K562 (cell line): ENCODE measurements at regions of chr17 and their contacts with region 1.

Region 1: DNA sequence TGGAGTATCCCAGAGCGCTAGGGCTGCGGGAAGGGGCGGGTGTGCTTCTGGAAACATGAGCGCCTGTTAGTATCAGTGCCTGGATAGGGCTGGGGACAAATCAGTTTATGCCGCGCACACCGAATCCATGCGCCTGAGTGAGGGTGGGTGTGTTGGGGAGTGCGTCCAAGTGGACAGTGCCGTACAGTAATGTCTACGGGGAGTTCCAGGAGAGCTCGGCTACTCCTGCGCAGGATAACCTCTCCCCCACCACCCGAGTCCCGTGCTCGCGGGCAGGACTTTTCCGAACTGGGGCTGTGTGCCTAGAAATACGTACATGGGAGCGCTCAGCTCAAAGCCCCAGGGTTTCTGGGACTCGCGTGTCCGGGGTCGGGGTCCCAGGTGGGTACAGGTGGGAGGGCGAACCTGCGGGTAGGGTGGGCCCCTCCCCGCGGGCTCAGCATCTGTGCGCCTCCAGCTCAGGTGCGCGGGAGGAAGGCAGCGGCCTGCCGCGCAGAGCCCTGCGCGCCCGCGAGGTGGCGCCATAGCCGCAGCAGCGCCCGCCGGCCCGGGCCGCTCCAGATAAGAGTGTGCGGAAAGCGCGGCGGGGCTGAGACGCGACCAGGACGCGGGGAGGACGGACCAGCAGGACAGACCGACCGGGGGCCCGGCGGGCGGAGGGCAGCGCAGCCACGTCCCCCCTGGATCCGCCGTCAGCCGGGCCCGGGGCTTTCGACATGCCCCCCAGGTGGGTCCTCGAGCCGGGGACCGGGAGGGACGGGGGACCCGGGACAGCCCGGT is at the start of gene HIC1:
- DNase-seq: peak; percentile 51 to 67 (median 52)
- ATAC-seq: peak; percentile 78
- H3K4me3 ChIP-seq: peak within 1 kb of the TSS; percentile 37
- H3K27ac ChIP-seq: no peak within 1 kb of the TSS
- H3K4me1 ChIP-seq: peaks cover 0 to 57% of the 10 kb centered on the region in 2 experiments; a peak in 2 of 5 replicates
- H3K27me3 ChIP-seq: no peaks in the 10 kb centered on the region
- CTCF ChIP-seq: peak; percentile 46 to 62 (median 56); a peak in 5 of 6 replicates
- EP300 ChIP-seq: no peak
- POLR2A ChIP-seq: no peak
- RAD21 ChIP-seq: peak; percentile 53 to 73
- polyA plus RNA-seq, gene HIC1: 0.01 to 0.03 TPM

Region 2: DNA sequence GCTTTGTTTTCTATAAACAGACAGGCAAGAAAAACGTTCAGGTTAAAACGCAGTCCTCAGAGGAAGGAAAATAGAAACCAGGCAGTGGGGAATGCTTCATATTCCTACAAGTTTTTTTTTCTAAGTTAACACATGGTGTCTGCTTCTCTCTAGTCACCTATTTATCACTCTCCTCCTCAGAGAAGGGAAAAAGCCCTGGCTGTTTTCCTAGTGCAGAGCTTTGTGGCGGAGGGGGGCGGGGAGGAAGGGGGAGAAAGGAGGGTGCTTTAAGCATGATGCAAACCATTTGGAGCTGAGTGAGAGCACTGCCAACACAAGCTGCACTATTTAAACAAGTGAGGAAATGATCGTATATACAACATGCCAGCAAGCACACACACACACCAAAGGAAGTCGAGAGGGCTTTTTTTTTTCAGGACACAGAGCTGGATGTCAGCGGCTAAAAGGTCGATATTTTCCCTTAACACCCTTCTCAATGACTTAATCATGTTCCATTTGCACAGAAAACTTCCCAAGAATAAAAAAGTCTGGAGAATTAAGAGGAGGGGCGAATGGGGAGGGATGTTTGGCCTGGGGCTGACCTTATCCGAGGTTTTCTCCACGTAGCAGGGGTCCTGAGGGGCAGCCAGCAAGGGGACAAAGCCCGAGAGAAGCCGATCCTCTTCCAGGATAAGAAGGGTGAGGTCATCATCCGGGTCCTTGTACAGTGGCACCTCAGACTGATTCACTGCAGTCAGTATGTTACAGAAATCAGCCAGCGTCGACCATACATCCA is 117.6 kb after region 1 on chr17:
- CTCF ChIA-PET with region 1: interaction called, 3 read pairs
- POLR2A ChIA-PET with region 1: no interaction called
- in situ Hi-C with region 1: no loop called
- intact Hi-C with region 1: loop called (anchors 10 kb)
- DNase-seq: no peak
- ATAC-seq: no peak
- H3K4me3 ChIP-seq: no peak overlapping the region
- H3K27ac ChIP-seq: no peak overlapping the region
- H3K4me1 ChIP-seq: peaks cover 0 to 5% of the 10 kb centered on the region in 2 experiments; a peak in 1 of 5 replicates
- H3K27me3 ChIP-seq: no peaks in the 10 kb centered on the region
- CTCF ChIP-seq: no peak
- EP300 ChIP-seq: no peak
- POLR2A ChIP-seq: no peak
- RAD21 ChIP-seq: no peak

Region 3: GRCh38 chr17:2351269-2351668 is 296.6 kb after region 1 on chr17:
- CTCF ChIA-PET with region 1: no interaction called
- POLR2A ChIA-PET with region 1: no interaction called
- in situ Hi-C with region 1: no loop called
- intact Hi-C with region 1: loop called (anchors 5 kb)
- DNase-seq: no peak
- ATAC-seq: no peak
- H3K4me3 ChIP-seq: no peak overlapping the region
- H3K27ac ChIP-seq: no peak overlapping the region
- H3K4me1 ChIP-seq: peaks cover 0 to 8% of the 10 kb centered on the region in 2 experiments; a peak in 2 of 5 replicates
- H3K27me3 ChIP-seq: no peaks in the 10 kb centered on the region
- CTCF ChIP-seq: no peak
- EP300 ChIP-seq: no peak
- POLR2A ChIP-seq: no peak
- RAD21 ChIP-seq: no peak